Ovary (tissue), 10 donors: ENCODE measurements at regions of chr19 and their contacts with region 1.

Region 1: GRCh38 chr19:16771618-16772017 is 52.0 kb downstream of the NWD1 start:
- DNase-seq: peak; percentile 72 to 85 (median 76)
- H3K4me3 ChIP-seq: no peak overlapping the region
- H3K27ac ChIP-seq: no peak overlapping the region
- H3K4me1 ChIP-seq: no peaks in the 10 kb centered on the region
- H3K27me3 ChIP-seq: no peaks in the 10 kb centered on the region
- CTCF ChIP-seq: peak; percentile 53 to 82 (median 70)
- EP300 ChIP-seq: no peak
- POLR2A ChIP-seq: no peak

Region 2: GRCh38 chr19:17052439-17053210 is 281.0 kb after region 1 on chr19:
- intact Hi-C with region 1: loop called (anchors 2 to 10 kb)
- DNase-seq: peak in 2 of 5 donors; percentile 32 to 38
- H3K4me3 ChIP-seq: no peak overlapping the region
- H3K27ac ChIP-seq: no peak overlapping the region
- H3K4me1 ChIP-seq: no peaks in the 10 kb centered on the region
- H3K27me3 ChIP-seq: no peaks in the 10 kb centered on the region
- CTCF ChIP-seq: peak in 1 of 3 donors; percentile 37
- EP300 ChIP-seq: no peak
- POLR2A ChIP-seq: no peak